ENCODE measurements at regions of chr11 and their contacts with region 1.

Region 1: DNA sequence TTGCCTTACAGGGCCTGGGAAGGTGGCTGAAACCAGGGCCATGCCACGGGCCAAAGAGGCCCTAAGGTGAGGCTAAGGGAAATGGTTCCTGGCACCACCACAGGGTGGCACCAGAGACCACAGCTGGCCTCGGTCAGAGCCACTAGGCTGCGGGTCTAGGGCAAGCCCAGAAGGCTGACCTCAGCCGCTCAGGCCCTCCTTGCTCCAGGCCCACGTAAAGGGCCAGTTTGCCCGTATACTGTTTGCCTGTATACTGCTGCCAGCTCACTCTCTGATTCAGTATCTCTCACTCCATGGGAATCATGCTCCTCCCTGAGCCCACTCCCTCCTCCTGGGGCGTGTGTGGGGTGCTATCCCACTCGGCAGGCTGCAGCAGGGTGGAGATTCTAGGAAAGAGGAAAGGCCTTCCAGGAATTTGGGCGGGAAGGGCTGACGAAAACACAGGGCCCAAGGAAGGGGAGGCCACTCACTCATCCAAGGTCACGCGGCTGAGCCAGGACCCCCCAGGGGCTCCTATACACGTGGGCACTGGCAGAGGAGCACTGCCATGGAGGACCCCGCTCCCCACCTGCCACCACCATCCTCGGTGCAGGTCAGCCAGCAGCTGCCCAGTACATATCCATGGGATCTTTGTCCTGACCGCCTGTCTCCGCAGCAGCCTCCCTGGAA is 62.4 kb downstream of the NECTIN1 start:
- DNase-seq: peak; percentile 30
- H3K4me3 Mint-ChIP-seq: no peak overlapping the region
- H3K27ac Mint-ChIP-seq: no peak overlapping the region
- H3K4me1 Mint-ChIP-seq: no peaks in the 10 kb centered on the region
- H3K27me3 Mint-ChIP-seq: no peaks in the 10 kb centered on the region

Region 2: GRCh38 chr11:119728651-119729580 is 62.3 kb after region 1 on chr11 and contains the start of gene NECTIN1:
- intact Hi-C with region 1: loop called (anchors 1 kb)
- DNase-seq: peak; percentile 78
- H3K4me3 Mint-ChIP-seq: peak within 1 kb of the TSS; percentile 78
- H3K27ac Mint-ChIP-seq: peak within 1 kb of the TSS; percentile 44
- H3K4me1 Mint-ChIP-seq: peaks cover 7% of the 10 kb centered on the region
- H3K27me3 Mint-ChIP-seq: peaks cover 66% of the 10 kb centered on the region
- total RNA-seq, gene NECTIN1: 5.0 and 5.6 TPM in 2 replicates

Region 3: GRCh38 chr11:119741369-119742262 is 75.0 kb after region 1 on chr11:
- intact Hi-C with region 1: loop called (anchors 1 kb)
- DNase-seq: peak; percentile 33
- H3K4me3 Mint-ChIP-seq: no peak overlapping the region
- H3K27ac Mint-ChIP-seq: no peak overlapping the region
- H3K4me1 Mint-ChIP-seq: peaks cover 3% of the 10 kb centered on the region
- H3K27me3 Mint-ChIP-seq: peaks cover 49% of the 10 kb centered on the region

Measured in activated T-helper 2 cell treated with anti-CD3 and anti-CD28 coated beads, Interferon-gamma antibody, Interleukin-2, Interleukin-4, amounts not matched to agents 10 μg/mL and 5 μg/mL and 100 μg/mL, durations not matched to agents 14 hours and 24 hours and 36 hours (primary cell).